PC-9 (cell line): ENCODE measurements at regions of chr3 and their contacts with region 1.

Region 1: DNA sequence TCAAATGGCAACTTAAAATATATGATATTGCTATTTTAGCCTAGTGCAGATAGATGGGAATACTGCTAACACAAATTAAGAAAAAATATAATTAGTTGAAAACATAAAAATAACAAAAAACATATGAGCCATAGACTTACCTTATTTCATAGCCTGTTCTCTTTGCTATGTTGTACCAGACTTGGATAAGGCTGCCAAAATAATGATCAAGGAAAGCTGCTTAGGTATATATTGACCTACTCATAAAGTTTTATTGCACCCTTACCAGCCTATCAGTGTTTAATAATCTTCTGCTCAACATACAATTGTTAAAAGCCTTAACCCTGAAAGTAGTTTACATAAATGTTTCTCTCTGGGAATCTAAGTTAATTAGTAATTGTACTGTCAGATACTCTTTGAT is at the start of gene SI:
- DNase-seq: no peak
- H3K4me3 ChIP-seq: no peak within 1 kb of the TSS
- H3K27ac ChIP-seq: no peak within 1 kb of the TSS
- H3K4me1 ChIP-seq: no peaks in the 10 kb centered on the region
- H3K27me3 ChIP-seq: no peaks in the 10 kb centered on the region
- CTCF ChIP-seq: no peak
- total RNA-seq, gene SI: not detected in 2 replicates

Region 2: DNA sequence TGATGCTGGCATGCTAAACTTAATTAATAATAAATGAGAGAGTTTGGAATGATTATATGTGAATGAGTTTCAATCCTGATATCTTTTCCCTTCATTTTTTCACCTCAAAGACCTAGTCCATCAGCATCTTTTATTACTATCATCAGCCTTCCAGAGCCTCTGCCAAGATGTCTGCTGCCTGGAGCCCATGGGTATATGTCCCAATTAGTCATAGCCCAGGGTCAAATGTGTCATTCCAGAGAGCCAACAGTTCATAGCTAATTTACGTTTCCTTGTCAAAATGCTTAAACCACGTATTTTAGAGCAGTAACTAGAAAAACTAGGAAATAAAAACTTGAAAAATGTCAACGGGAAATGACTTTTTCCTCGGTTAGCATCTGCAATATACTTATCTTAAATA is 457.9 kb before region 1 on chr3:
- CTCF ChIA-PET with region 1: no interaction called
- POLR2A ChIA-PET with region 1: interaction called, 16 read pairs
- intact Hi-C with region 1: no loop called
- DNase-seq: no peak
- H3K4me3 ChIP-seq: no peak overlapping the region
- H3K27ac ChIP-seq: no peak overlapping the region
- H3K4me1 ChIP-seq: no peaks in the 10 kb centered on the region
- H3K27me3 ChIP-seq: no peaks in the 10 kb centered on the region
- CTCF ChIP-seq: no peak